ENCODE measurements at regions of chr9 and their contacts with region 1.

Region 1: DNA sequence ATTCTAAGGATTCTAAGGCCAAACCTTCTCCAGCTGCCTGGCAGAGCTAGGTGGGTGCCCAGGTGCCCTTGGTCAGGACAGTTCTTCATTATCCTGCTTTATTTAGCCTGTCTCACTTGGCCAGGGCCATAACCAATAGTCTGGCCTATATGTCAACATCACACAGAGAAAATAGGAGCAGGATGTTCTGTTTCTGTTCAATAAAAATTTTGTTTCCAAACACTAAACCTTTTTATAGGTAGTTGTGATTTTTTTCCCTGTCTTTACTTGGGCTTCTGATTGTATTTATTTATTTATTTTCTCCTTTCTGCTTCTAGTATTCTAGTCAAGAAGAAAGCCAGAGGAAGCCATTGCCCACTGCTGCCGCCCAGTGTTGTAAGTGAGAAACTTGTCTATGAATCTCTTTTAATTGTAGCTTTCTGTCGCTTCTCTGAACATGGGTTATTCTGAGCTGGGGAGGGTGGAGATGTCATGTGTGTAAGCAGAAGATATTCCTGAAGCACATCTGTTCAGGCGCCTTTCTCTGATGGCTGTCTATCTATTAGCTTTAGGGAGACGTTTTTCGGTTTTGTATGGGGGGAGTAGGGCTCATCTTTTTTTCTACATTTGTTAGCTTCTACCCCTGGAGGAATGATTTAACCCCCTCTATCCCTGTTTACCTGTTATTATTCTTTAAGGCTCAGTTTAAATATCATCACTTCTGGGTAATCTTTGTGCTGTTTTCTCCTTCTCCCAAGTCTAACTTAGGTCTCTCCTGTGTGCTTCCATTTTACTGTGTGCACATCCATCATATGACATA is 97.1 kb downstream of the UNC13B start:
- DNase-seq: peak; percentile 68 to 69
- H3K4me3 ChIP-seq: no peak overlapping the region
- H3K4me3 Mint-ChIP-seq: no peak overlapping the region
- H3K27ac Mint-ChIP-seq: no peak overlapping the region
- H3K4me1 ChIP-seq: peaks cover 5% of the 10 kb centered on the region
- H3K4me1 Mint-ChIP-seq: peaks cover 12% of the 10 kb centered on the region
- H3K27me3 ChIP-seq: no peaks in the 10 kb centered on the region
- H3K27me3 Mint-ChIP-seq: no peaks in the 10 kb centered on the region
- CTCF ChIP-seq: peak; percentile 65 to 76

Region 2: DNA sequence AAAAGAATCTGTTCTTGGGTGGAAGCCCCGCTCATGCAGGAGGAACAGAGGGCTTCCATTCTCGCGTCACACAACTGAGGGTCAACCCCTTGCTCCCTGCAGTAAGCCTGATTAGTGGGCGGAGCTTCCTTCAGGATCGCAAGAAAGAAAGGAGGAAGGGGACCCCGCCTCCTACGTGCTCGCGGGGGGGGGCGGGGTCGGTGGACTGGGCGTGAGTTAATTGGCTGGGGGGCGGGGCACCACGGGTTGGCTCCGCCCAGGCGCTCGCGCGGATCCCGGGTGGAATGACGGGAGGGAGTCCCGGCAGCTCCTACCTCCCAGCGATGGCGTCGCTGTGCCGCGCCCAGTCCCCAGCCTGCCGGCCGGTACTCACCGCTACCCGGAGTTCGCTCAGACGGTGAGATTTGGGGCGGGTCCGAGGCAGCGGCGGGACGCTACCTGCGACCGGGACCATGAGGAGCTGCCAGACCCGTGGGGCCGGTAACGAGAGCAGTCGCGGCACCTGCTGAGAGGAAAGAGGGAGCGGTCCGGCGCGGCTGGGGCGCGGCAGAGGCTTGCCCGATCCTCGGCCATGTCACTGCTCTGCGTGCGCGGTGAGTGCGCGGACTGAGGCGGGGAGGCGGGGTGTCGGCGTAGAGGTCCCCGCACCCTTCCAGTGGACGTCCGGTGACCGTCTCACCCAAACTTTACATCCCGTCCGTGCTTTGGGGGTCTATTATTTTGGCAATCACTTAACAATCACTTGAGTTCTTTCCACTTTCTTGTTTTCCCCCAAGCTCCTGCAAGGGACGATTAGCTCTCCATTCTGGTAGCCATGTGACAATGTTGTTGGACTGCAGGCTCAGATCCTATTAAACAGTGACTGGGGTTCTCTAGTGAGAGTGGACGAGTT is 96.9 kb before region 1 on chr9 and contains the start of gene UNC13B:
- CTCF ChIA-PET with region 1: interaction called, 14 read pairs
- POLR2A ChIA-PET with region 1: interaction called, 4 read pairs
- intact Hi-C with region 1: loop called (anchors 2 kb)
- DNase-seq: peak; percentile 95 to 97
- H3K4me3 ChIP-seq: peak within 1 kb of the TSS; percentile 78
- H3K4me3 Mint-ChIP-seq: peak within 1 kb of the TSS; percentile 80
- H3K27ac Mint-ChIP-seq: peak within 1 kb of the TSS; percentile 79
- H3K4me1 ChIP-seq: peaks cover 10% of the 10 kb centered on the region
- H3K4me1 Mint-ChIP-seq: no peaks in the 10 kb centered on the region
- H3K27me3 ChIP-seq: no peaks in the 10 kb centered on the region
- H3K27me3 Mint-ChIP-seq: no peaks in the 10 kb centered on the region
- CTCF ChIP-seq: peak in 1 of 2 experiments; percentile 16
- total RNA-seq, gene UNC13B: 19.7 and 20.8 TPM in 2 replicates

Region 3: DNA sequence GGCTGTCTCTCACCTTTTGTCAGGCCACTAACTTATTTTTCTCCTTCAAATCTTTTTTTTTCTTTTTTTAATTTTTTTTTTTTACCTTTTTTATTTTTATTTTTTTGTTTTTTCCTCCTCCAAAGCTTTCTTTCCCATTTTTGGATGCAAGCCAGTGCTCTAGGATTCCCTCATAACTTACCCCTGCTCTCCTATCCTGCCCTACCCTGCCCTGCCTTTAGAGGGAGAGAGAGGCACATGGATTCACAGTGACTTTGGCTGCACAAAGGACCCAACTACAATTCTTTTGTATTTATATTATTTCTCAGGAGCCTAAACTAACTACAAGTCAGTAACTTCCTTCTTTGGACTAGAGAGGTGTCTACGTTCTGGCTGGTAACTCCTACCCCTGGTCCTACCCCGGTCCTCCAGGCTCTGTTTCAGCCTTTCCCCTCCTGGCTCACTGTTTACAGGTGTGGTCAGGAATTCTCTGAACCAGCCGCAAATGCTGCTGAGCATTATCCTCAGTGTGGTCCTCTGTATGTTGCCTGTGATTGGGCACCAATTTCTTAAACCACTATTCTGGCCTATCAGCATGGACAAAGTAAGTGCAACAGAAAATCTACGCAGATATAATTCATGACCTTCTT is 222.6 kb after region 1 on chr9:
- CTCF ChIA-PET with region 1: interaction called, 5 read pairs
- POLR2A ChIA-PET with region 1: no interaction called
- intact Hi-C with region 1: loop called (anchors 2 kb)
- DNase-seq: peak; percentile 55 to 62
- H3K4me3 ChIP-seq: no peak overlapping the region
- H3K4me3 Mint-ChIP-seq: no peak overlapping the region
- H3K27ac Mint-ChIP-seq: no peak overlapping the region
- H3K4me1 ChIP-seq: peaks cover 4% of the 10 kb centered on the region; the same call in 1 of the 2 replicates
- H3K4me1 Mint-ChIP-seq: peaks cover 4% of the 10 kb centered on the region
- H3K27me3 ChIP-seq: no peaks in the 10 kb centered on the region
- H3K27me3 Mint-ChIP-seq: no peaks in the 10 kb centered on the region
- CTCF ChIP-seq: peak; percentile 41 to 86

Measured in Caco-2 (cell line).